Activated T-helper 2 cell treated with anti-CD3 and anti-CD28 coated beads, Interferon-gamma antibody, Interleukin-2, Interleukin-4, amounts not matched to agents 10 μg/mL and 5 μg/mL and 100 μg/mL, durations not matched to agents 14 hours and 24 hours and 36 hours (primary cell): ENCODE measurements at regions of chr9 and their contacts with region 1.

Region 1: GRCh38 chr9:27573634-27574590 is 631 bp upstream of the C9orf72 start:
- DNase-seq: peak; percentile 95
- H3K4me3 Mint-ChIP-seq: peak overlapping the region; percentile 97
- H3K27ac Mint-ChIP-seq: peak overlapping the region; percentile 100
- H3K4me1 Mint-ChIP-seq: peaks cover 32% of the 10 kb centered on the region
- H3K27me3 Mint-ChIP-seq: peaks cover 6% of the 10 kb centered on the region

Region 2: DNA sequence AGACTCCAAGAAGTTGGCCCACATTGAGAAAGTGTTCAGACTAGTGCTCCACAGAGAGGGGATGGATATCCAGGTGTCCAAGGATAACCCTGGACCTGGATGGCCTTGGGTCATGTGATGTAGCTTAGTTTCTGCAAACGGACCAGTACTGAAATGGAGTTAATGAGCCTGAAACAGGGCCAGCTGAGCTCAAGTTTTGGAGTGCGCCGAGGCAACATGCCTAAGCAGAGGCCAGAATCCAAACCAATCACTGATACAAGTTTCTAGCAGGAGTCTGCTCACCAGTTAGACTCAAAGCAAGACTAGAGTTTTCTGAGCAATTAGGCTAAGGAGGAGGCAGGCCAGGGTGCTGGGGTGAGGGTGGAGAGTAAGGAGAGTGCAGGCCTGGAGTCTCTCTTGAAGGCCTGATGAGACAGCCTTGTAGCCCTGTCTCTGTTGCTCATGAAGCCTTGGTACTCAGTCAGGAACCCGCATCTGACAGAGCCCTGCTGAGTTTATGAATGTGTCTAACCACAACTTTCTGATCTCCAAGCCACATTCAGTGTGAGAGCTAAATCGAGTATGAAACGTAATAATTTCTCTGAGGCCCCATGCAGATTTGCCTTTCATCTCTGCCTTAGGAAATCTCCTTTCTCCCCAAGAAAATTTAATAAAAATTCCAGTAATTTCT is 208.1 kb before region 1 on chr9:
- intact Hi-C with region 1: loop called (anchors 2 kb)
- DNase-seq: peak; percentile 46
- H3K4me3 Mint-ChIP-seq: no peak overlapping the region
- H3K27ac Mint-ChIP-seq: peak overlapping the region; percentile 51
- H3K4me1 Mint-ChIP-seq: peaks cover 32% of the 10 kb centered on the region
- H3K27me3 Mint-ChIP-seq: peaks cover 12% of the 10 kb centered on the region

Region 3: DNA sequence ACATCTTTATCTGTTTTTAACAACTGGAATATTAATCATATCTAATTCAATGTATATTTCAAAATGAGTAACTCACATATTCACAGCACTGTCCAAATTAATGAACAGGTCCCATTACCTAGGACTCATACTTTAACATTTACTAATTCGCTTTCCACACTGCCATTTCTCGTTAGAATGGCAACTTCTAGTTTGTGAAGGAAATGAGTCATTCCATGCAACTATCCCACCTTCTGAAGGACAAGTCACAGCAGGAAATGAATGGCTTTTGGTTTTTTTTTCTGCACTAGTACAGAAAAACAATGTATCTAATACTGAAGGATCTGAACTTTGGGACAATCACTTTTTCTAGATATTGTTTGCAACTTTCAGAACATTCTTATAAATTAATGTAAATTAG is 74.4 kb before region 1 on chr9:
- intact Hi-C with region 1: loop called (anchors 2 kb)
- DNase-seq: no peak
- H3K4me3 Mint-ChIP-seq: no peak overlapping the region
- H3K27ac Mint-ChIP-seq: peak overlapping the region; percentile 5
- H3K4me1 Mint-ChIP-seq: peaks cover 15% of the 10 kb centered on the region
- H3K27me3 Mint-ChIP-seq: no peaks in the 10 kb centered on the region

Region 4: DNA sequence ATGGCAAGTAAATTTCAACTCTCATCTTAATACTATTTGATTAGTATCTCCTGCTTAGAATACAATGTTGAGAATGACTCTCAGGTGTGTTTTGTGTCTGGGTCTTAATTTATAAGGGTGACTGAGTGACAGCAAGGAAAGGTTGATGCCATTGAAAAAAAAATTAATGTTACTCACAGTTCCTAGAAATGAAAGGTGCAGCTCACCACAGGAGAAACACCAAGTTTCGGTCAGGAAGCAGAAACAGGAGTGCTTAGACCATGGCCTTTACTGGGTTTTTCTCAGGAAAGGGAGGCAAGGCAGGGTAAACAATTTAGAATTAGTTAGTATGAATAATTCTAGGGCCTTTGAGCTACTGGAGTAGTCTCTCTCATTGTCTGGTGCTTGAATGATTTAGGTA is 158.6 kb after region 1 on chr9:
- intact Hi-C with region 1: loop called (anchors 2 kb)
- DNase-seq: no peak
- H3K4me3 Mint-ChIP-seq: no peak overlapping the region
- H3K27ac Mint-ChIP-seq: peak overlapping the region; percentile 58
- H3K4me1 Mint-ChIP-seq: peaks cover 25% of the 10 kb centered on the region
- H3K27me3 Mint-ChIP-seq: no peaks in the 10 kb centered on the region